Activated CD4-positive, alpha-beta memory T cell treated with anti-CD3 and anti-CD28 coated beads, Interleukin-2, amount 10 ng/mL, durations not matched to agents 7 days and 5 days (primary cell): ENCODE measurements at regions of chr12 and their contacts with region 1.

Region 1: GRCh38 chr12:39628836-39629235 is 9.2 kb upstream of the ABCD2 start:
- DNase-seq: no peak
- H3K4me3 Mint-ChIP-seq: peak overlapping the region; percentile 24
- H3K27ac Mint-ChIP-seq: peak overlapping the region; percentile 87
- H3K4me1 Mint-ChIP-seq: peaks cover 43% of the 10 kb centered on the region
- H3K27me3 Mint-ChIP-seq: no peaks in the 10 kb centered on the region

Region 2: GRCh38 chr12:39671898-39672875 is 43.4 kb after region 1 on chr12:
- CTCF ChIA-PET with region 1: no interaction called
- POLR2A ChIA-PET with region 1: interaction called, 10 read pairs
- DNase-seq: no peak
- H3K4me3 Mint-ChIP-seq: no peak overlapping the region
- H3K27ac Mint-ChIP-seq: no peak overlapping the region
- H3K4me1 Mint-ChIP-seq: peaks cover 48% of the 10 kb centered on the region
- H3K27me3 Mint-ChIP-seq: no peaks in the 10 kb centered on the region

Region 3: DNA sequence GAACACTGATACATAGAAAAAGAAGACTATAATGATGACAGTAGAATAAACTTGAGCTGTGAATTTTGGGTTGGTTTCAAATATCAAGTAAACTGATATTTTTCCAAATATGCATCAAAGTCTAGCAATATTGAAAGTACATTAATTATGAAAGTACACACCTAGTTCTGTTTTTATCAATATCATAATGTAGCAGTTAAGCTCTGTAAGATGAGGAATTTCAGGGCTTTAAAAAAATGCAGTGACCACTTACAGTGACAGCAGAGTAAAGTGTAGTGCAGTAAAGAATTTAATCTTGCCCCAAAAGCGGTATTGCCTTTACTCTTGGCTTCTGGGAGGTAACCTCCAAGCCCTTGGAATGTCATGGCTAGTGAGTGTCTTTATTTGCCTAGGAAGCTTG is 93.7 kb after region 1 on chr12:
- CTCF ChIA-PET with region 1: no interaction called
- POLR2A ChIA-PET with region 1: no interaction called
- DNase-seq: no peak
- H3K4me3 Mint-ChIP-seq: no peak overlapping the region
- H3K27ac Mint-ChIP-seq: no peak overlapping the region
- H3K4me1 Mint-ChIP-seq: peaks cover 26% of the 10 kb centered on the region
- H3K27me3 Mint-ChIP-seq: no peaks in the 10 kb centered on the region